Right cardiac atrium (tissue), 5 donors: ENCODE measurements at regions of chr19 and their contacts with region 1.

Region 1: GRCh38 chr19:45643024-45643926 is 4.1 kb upstream of the EML2 start:
- DNase-seq: peak; percentile 83 to 95 (median 95)
- ATAC-seq: peak; percentile 43 to 58
- H3K4me3 ChIP-seq: no peak overlapping the region
- H3K27ac ChIP-seq: no peak overlapping the region
- H3K4me1 ChIP-seq: peaks cover 2% of the 10 kb centered on the region
- H3K27me3 ChIP-seq: no peaks in the 10 kb centered on the region

Region 2: GRCh38 chr19:45523642-45524256 is 119.5 kb before region 1 on chr19:
- intact Hi-C with region 1: loop called in 3 of 4 experiments (anchors 2 to 10 kb)
- DNase-seq: peak; percentile 68 to 88 (median 87)
- ATAC-seq: peak; percentile 90 to 95
- H3K4me3 ChIP-seq: no peak overlapping the region
- H3K27ac ChIP-seq: peak overlapping the region; percentile 68
- H3K4me1 ChIP-seq: no peaks in the 10 kb centered on the region
- H3K27me3 ChIP-seq: no peaks in the 10 kb centered on the region

Region 3: DNA sequence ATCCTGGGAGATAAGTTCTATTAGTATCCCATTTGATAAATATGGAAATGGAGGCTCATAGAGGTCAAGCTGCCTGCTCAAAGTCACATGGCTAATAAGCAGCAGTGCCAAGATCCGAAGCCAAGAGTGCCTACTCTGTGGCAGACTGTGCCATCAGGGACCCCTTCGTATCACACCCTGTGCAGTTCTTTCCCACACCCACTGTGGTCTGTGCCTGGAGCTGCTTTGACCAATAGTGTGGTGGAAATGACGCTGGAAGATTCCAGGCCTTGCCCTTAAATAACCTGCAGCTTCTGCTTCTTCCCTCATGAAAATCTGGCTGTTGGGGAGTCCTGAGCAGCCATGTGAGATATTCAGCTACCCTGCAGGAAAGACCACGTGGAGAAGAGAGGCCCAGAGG is 68.7 kb before region 1 on chr19:
- intact Hi-C with region 1: no loop called
- DNase-seq: no peak
- ATAC-seq: peak; percentile 52 to 75
- H3K4me3 ChIP-seq: no peak overlapping the region
- H3K27ac ChIP-seq: peak overlapping the region; percentile 83
- H3K4me1 ChIP-seq: peaks cover 7% of the 10 kb centered on the region
- H3K27me3 ChIP-seq: no peaks in the 10 kb centered on the region

Region 4: DNA sequence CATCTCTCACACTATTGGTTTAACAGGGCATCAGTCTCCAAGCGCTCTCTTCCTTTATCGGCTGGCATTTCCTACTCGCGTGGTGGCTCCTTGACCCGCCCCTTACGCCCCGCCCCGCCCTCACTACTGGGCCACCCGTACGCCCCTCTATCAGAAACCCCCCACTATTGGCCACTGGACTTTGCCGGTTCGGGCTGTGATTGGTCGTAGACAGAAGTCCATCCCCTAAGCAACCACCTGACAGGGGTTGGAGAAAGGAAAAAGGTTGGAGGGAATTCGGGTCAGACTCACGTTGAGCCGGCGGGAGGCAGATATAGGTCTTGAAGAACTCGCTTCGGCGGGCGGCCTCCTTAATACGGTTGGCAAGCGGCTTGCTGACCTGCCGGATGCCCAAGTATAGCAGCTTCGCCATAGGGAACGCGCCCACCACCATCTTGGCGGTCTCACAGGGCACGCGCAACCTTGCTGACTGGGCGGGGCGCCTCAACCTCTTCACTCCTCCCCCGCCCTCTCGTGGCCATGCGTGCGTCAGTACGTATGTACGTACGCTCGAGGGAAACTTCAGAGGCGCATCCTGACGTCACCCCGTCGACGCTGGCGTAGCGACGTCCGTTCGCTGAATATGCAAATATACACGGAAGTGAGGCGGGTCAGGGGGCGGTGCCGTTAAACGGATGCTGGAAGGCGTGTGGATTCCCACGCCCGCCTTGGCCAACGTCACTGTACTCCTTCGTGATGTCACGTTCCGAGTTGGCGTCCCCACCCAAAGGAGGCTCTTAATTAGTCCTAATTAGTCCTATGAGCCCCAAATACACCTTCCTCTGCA is 58.7 kb before region 1 on chr19 and contains the start of gene OPA3:
- intact Hi-C with region 1: loop called in 1 of 4 experiments (anchors 10 kb)
- DNase-seq: peak; percentile 100
- ATAC-seq: peak; percentile 97 to 98
- H3K4me3 ChIP-seq: peak within 1 kb of the TSS; percentile 64
- H3K27ac ChIP-seq: peak within 1 kb of the TSS; percentile 98
- H3K4me1 ChIP-seq: no peaks in the 10 kb centered on the region
- H3K27me3 ChIP-seq: no peaks in the 10 kb centered on the region
- total RNA-seq, gene OPA3: 20.7 to 27.6 (median 24.1) TPM

Region 5: DNA sequence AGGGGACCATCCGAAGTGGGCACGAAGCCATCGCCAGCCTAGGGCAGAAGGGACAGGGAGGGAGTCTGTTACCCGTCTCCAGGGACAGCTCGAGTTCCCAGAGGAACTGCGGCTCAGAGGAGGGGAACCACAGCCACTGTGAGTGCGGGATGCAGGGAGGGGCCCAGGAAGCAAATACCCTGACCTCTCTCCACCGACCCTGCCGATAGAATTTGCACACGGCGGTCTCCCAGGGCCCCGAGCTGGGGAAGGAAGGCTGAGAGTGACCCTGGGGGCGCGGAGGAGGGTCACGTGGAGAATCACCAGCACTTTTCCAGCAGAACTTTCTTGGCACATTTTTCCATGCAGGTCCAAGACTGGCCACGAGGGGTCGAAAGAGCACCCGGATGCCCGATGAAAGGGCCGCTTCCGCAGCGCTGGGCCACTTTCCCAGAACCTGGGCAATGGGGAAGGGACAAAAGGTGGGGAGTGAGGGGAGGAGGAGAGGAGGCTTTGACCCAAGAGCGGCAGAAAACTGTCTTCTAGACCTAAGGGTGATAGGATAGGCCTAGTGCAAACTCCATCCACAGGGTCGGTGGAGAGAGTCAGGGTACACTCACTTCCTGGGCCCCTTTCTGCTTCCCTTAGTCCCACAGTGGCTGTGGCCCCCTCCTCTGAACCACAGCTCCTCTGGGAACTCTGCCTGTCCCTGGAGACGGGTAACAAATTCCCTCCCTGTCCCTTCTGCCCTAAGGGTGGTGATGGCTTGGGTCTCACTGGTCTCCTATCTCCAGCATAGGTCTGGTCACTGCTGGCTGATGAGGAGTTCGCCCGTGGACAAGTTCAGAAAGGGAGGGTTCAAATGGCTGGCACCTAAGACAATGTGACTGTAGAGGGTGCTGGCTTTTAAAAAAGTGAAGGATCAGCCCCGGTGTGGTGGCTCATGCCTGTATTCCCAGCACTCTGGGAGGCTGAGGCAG is 35.9 kb before region 1 on chr19:
- intact Hi-C with region 1: loop called in 1 of 4 experiments (anchors 5 kb)
- DNase-seq: peak; percentile 75 to 92 (median 91)
- ATAC-seq: peak; percentile 84 to 85
- H3K4me3 ChIP-seq: no peak overlapping the region
- H3K27ac ChIP-seq: peak overlapping the region; percentile 3
- H3K4me1 ChIP-seq: no peaks in the 10 kb centered on the region
- H3K27me3 ChIP-seq: no peaks in the 10 kb centered on the region